ENCODE measurements at regions of chr5 and their contacts with region 1.

Region 1: GRCh38 chr5:14351845-14352712 is 208.9 kb downstream of the TRIO start:
- DNase-seq: peak; percentile 43
- H3K4me3 Mint-ChIP-seq: no peak overlapping the region
- H3K27ac Mint-ChIP-seq: no peak overlapping the region
- H3K4me1 Mint-ChIP-seq: no peaks in the 10 kb centered on the region
- H3K27me3 Mint-ChIP-seq: peaks cover 6% of the 10 kb centered on the region

Region 2: DNA sequence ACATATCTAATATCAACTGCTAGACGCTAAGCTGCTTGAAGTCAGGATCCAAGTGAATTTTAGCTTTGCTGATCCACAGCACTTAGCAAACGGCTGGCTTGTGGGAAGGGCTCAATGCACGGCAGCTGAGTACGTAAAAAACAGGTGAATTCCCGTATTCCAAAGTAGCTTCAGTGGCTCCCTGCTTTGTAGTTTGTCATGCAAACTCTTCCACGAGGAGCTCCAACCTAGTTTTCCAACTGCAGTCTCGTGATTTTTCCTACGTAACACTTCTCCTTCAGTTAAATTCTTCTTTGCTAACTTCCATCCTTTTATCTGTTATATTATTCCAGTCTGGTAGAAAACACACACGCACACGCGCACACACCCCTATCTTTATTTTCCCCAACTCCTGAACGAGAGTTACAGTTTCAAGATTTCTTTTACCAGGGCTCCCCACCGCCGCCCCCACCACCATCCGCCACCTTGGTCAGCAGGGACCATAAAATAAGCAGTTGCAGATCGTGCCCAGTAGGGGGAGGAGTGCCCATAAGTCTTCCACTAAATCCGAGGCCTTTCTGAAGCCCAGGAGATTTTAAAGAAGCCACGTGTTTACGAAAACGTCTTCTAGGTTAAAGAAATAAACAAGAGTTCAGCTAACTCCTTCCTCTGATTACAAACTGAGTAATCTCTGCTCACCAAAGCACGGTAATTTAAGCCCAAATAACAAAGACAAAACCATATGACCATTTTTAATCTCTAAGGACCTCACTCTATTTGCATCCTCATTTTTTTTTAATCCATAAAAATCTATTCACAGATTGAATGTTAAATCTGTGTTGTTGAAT is 243.7 kb before region 1 on chr5:
- intact Hi-C with region 1: loop called (anchors 10 kb)
- DNase-seq: no peak
- H3K4me3 Mint-ChIP-seq: peak overlapping the region; percentile 61
- H3K27ac Mint-ChIP-seq: peak overlapping the region; percentile 40
- H3K4me1 Mint-ChIP-seq: peaks cover 26% of the 10 kb centered on the region
- H3K27me3 Mint-ChIP-seq: peaks cover 12% of the 10 kb centered on the region

Region 3: GRCh38 chr5:14305045-14305444 is 47.0 kb before region 1 on chr5:
- intact Hi-C with region 1: no loop called
- DNase-seq: no peak
- H3K4me3 Mint-ChIP-seq: no peak overlapping the region
- H3K27ac Mint-ChIP-seq: no peak overlapping the region
- H3K4me1 Mint-ChIP-seq: no peaks in the 10 kb centered on the region
- H3K27me3 Mint-ChIP-seq: peaks cover 1% of the 10 kb centered on the region

Region 4: GRCh38 chr5:14364576-14365472 is 12.7 kb after region 1 on chr5:
- intact Hi-C with region 1: loop called (anchors 1 kb)
- DNase-seq: no peak
- H3K4me3 Mint-ChIP-seq: no peak overlapping the region
- H3K27ac Mint-ChIP-seq: peak overlapping the region; percentile 24
- H3K4me1 Mint-ChIP-seq: peaks cover 54% of the 10 kb centered on the region
- H3K27me3 Mint-ChIP-seq: no peaks in the 10 kb centered on the region

Region 5: GRCh38 chr5:14399054-14399692 is 47.1 kb after region 1 on chr5:
- intact Hi-C with region 1: loop called (anchors 1 kb)
- DNase-seq: no peak
- H3K4me3 Mint-ChIP-seq: no peak overlapping the region
- H3K27ac Mint-ChIP-seq: no peak overlapping the region
- H3K4me1 Mint-ChIP-seq: peaks cover 13% of the 10 kb centered on the region
- H3K27me3 Mint-ChIP-seq: peaks cover 1% of the 10 kb centered on the region

Region 6: GRCh38 chr5:14644623-14645237 is 292.7 kb after region 1 on chr5:
- intact Hi-C with region 1: loop called (anchors 1 kb)
- DNase-seq: no peak
- H3K4me3 Mint-ChIP-seq: no peak overlapping the region
- H3K27ac Mint-ChIP-seq: no peak overlapping the region
- H3K4me1 Mint-ChIP-seq: no peaks in the 10 kb centered on the region
- H3K27me3 Mint-ChIP-seq: peaks cover 17% of the 10 kb centered on the region

Region 7: DNA sequence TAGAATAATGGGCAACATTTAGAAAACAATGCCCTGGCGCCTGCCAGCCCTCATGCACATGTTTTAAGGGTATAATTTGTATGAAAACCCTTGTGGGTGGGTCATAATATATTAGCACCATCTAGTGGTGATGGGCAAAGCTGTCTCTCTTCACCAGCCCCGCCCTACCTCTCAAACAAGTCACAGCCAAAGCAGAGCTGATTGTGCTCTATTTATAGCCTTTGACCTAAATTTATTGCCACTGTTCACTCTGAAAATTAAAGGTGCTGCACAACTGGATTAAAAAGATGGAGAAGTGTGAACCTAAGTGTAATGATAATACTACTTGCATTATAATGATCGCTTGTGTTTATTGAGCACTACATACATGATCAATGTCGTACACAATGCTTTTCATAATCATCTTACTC is 651.4 kb after region 1 on chr5:
- intact Hi-C with region 1: loop called (anchors 1 kb)
- DNase-seq: peak; percentile 33
- H3K4me3 Mint-ChIP-seq: no peak overlapping the region
- H3K27ac Mint-ChIP-seq: no peak overlapping the region
- H3K4me1 Mint-ChIP-seq: peaks cover 20% of the 10 kb centered on the region
- H3K27me3 Mint-ChIP-seq: peaks cover 28% of the 10 kb centered on the region

Region 8: DNA sequence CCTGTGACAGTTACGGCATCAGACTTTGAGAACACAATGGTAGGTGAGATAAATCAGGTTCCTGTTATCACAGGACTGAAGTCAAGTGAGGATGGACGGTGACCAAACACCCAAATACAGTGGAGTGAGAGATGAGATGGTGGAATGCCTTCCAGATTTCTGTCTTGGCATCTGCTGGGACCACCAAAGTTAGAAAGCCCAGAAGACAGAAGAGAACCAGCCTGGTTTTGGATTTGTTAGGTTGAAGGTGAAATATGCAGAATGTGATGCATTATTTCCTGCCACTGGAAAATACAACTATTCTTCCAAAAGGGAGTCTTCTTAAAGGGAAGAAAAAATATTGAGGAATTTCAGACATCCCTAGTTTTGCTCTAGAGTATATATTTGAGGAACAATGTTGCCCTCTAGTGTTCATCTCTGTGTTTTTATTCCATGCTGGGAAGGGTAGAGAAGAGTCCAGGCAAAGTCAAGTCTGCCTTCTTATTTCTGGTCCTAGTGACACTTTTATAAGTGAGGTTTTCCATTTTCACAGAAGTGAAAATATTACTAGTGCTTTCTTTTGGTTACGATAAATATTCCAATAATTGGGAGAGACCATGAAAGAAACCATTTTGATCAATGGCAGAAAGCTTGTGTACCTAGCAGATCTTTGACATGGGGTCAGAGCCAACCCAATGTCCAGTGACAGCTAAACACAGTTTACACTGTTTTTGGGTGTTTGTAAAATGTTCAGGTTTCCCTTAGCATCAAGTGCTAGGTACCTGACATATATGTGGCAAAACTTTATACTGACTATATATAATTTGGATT is 661.8 kb after region 1 on chr5:
- intact Hi-C with region 1: loop called (anchors 2 kb)
- DNase-seq: no peak
- H3K4me3 Mint-ChIP-seq: no peak overlapping the region
- H3K27ac Mint-ChIP-seq: no peak overlapping the region
- H3K4me1 Mint-ChIP-seq: no peaks in the 10 kb centered on the region
- H3K27me3 Mint-ChIP-seq: peaks cover 4% of the 10 kb centered on the region

Measured in activated T-helper 1 cell treated with anti-CD3 and anti-CD28 coated beads, Interleukin-12 subunit alpha, Interleukin-12 subunit beta, Interleukin-2, Interleukin-4 antibody, amounts not matched to agents 30 ng/mL and 10 ng/mL and 1 ng/mL, durations not matched to agents 14 hours and 24 hours and 36 hours (primary cell).